Tibial artery (tissue), 4 donors: ENCODE measurements at regions of chr16 and their contacts with region 1.

Region 1: GRCh38 chr16:58020628-58021139 is 4.9 kb upstream of the MMP15 start:
- DNase-seq: peak in 1 of 2 donors; percentile 60
- H3K4me3 ChIP-seq: no peak overlapping the region
- H3K27ac ChIP-seq: no peak overlapping the region
- H3K4me1 ChIP-seq: peaks cover 0 to 28% (median 22%) of the 10 kb centered on the region in 4 donors
- H3K27me3 ChIP-seq: no peaks in the 10 kb centered on the region
- CTCF ChIP-seq: peak; percentile 67 to 74

Region 2: GRCh38 chr16:58129097-58129936 is 108.6 kb after region 1 on chr16 and contains the start of gene CFAP20:
- intact Hi-C with region 1: loop called (anchors 5 kb)
- DNase-seq: peak; percentile 99
- H3K4me3 ChIP-seq: peak within 1 kb of the TSS; percentile 72 to 93
- H3K27ac ChIP-seq: peak within 1 kb of the TSS; percentile 80 to 94
- H3K4me1 ChIP-seq: peaks cover 0 to 39% (median 29%) of the 10 kb centered on the region in 4 donors
- H3K27me3 ChIP-seq: no peaks in the 10 kb centered on the region
- CTCF ChIP-seq: no peak

Region 3: GRCh38 chr16:58198022-58198683 is 177.5 kb after region 1 on chr16 and contains the start of gene CSNK2A2:
- intact Hi-C with region 1: loop called (anchors 5 kb)
- DNase-seq: peak; percentile 41 to 81
- H3K4me3 ChIP-seq: peak within 1 kb of the TSS; percentile 68 to 86
- H3K27ac ChIP-seq: peak within 1 kb of the TSS; percentile 46 to 67
- H3K4me1 ChIP-seq: peaks cover 3 to 24% (median 16%) of the 10 kb centered on the region in 4 donors
- H3K27me3 ChIP-seq: peaks cover 0 to 12% of the 10 kb centered on the region in 2 donors
- CTCF ChIP-seq: peak; percentile 1 to 50